AG04449 (cell line): ENCODE measurements at regions of chr2 and their contacts with region 1.

Region 1: DNA sequence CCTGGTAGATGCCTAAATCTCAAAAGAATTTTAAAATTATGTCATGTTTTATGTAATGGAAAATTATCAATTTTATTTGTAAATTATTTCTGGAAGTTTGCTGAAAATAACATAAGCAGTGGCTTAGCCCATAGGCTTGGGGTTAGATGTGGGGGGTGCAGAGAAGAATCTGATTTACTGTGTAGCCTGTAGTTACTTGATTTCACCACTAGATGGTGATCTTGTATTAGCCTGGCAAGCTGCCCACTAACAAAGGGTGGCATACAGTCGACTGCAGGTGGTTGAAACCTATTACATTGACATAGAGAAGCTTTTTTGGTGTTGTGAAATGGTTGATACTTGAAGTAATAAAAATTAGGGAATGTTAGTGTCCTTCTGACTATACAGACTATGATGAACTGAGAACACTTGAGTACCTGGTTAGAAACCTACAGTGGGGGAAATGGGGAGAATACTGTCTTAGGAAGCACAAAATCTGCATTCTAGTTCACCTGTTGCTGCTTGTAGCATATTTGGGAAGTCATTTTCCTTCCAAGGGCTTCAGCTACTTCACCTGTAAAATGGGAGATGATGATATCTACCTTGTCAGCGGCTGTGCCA is 191.0 kb upstream of the LHCGR start:
- DNase-seq: no peak
- H3K4me3 ChIP-seq: no peak overlapping the region
- CTCF ChIP-seq: peak; percentile 67

Region 2: DNA sequence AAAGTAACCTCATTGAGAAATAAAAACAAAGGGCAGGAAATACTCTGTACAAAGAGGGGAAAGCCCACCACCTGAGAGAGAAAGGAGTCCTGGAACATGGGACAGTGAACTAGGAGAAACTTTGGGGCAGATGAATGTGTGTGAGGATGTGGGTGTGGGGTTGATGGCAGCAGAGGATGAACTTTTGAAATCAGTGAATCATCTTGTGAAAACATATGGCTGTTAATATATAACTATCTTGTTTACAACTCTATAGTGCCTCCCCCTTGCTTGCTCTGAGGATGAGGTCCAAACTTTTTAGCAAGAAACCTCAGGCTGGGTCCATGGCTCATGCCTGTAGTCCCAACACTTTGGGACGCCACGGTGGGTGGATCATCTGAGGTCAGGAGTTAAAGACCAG is 19.2 kb before region 1 on chr2:
- CTCF ChIA-PET with region 1: no interaction called
- POLR2A ChIA-PET with region 1: no interaction called
- DNase-seq: no peak
- H3K4me3 ChIP-seq: no peak overlapping the region
- CTCF ChIP-seq: no peak

Region 3: DNA sequence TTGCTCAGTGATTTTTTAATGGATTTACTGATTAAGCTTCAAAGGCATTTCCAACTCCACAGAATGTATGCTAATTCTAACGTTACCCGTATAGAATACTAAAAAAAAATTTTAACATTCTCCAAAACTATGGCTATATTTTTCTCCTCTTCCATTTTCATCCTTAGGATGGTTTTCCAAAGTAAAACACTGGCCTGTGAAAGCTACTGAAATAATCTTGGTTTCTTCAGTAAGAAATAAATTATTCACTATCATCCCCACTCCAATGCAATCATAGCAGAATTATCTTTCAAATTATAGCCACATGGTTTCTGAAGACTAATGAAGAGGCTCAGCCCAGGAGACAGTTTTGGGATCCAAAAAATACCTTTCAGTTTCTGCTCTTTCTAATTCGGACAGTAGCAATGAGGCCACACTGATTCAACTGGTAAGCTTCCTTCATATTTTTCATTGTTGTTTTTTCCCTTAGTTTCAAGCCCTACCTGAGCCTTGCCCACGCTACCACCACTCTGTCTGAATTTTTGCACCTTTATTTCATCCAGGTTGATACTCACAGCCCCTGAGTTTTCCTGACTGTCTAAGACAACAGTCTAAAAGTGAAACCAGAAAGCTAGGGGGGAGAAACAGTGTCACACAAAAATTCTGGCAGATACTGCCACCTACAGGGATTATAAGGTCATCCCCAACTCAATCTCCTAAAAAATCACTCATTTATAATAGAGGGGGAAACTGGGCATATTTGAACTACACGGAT is 1197.5 kb after region 1 on chr2:
- CTCF ChIA-PET with region 1: interaction called, 32 read pairs
- POLR2A ChIA-PET with region 1: no interaction called
- DNase-seq: no peak
- H3K4me3 ChIP-seq: peak overlapping the region; percentile 49
- CTCF ChIP-seq: peak; percentile 28

Region 4: GRCh38 chr2:50401772-50402653 is 1455.5 kb after region 1 on chr2:
- CTCF ChIA-PET with region 1: interaction called, 26 read pairs
- POLR2A ChIA-PET with region 1: no interaction called
- DNase-seq: peak; percentile 7
- H3K4me3 ChIP-seq: no peak overlapping the region
- CTCF ChIP-seq: peak; percentile 74

Region 5: GRCh38 chr2:50492477-50492851 is 1545.9 kb after region 1 on chr2:
- CTCF ChIA-PET with region 1: interaction called, 11 read pairs
- POLR2A ChIA-PET with region 1: no interaction called
- DNase-seq: peak; percentile 1
- H3K4me3 ChIP-seq: no peak overlapping the region
- CTCF ChIP-seq: peak; percentile 51